A673 (cell line): ENCODE measurements at regions of chrX and their contacts with region 1.

Region 1: DNA sequence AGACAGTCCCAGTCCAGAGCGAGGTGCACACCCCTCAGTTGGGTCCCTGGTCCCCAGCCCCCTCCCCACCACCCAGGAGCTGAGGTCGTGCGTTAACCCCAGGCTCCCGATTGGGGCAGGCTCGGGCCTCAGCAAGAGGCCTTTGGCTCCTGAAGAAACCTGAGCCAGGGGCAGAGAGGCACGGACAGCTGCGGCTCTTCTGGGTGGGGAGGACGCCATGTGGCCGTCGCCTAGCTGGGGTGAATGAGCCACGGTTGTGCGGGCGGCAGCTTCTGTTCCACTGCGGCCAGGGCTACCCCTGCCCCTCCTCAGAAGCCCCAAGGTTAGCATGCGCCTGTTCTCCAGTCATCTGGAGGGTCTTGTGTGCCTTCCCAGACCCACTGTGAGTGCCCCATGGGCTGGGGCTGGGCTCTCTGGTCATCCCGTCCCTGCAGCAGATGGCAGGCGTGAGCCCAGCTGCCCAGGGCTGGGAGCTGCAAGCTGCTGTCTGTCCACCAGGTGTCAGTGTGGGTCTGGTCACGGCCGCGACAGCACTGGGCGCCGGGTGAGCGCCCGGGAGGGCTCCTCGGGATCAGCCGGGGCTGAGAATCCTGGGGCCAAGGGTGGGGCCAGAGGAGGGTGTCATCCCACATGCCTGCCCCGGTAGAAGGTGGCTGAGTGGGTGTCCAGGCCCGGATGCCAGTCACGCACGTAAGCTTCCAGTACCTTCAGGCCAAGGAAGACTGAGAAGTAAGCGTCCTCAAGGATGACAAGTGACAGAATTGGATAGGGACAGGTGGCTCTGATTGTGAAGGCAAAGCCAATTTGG is 21.9 kb downstream of the ATP2B3 start:
- DNase-seq: peak; percentile 58
- H3K4me3 ChIP-seq: no peak overlapping the region
- H3K27ac ChIP-seq: no peak overlapping the region
- H3K4me1 ChIP-seq: no peaks in the 10 kb centered on the region
- H3K27me3 ChIP-seq: no peaks in the 10 kb centered on the region
- CTCF ChIP-seq: peak; percentile 92

Region 2: DNA sequence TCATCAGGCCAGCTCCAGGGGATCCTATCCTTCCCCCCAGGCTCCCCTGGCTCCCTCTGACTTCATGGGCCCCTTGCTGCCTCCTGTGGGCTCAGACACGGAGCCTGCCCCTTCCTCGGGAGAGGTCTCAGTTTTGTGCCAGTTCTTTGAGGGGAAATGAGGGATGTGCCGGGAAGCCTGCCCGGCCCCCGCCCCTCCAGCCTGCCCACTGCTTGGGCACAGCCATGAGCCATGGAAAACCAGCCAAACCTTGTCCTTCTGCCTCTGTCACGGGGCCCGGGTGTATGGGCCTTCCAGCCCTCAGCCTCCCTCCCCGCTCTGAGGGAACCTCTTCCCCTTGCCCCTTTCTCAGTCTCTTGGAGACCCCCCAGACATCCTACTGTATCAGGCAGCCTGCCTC is 37.8 kb before region 1 on chrX:
- CTCF ChIA-PET with region 1: no interaction called
- POLR2A ChIA-PET with region 1: interaction called, 14 read pairs
- intact Hi-C with region 1: no loop called
- DNase-seq: no peak
- H3K4me3 ChIP-seq: no peak overlapping the region
- H3K27ac ChIP-seq: no peak overlapping the region
- H3K4me1 ChIP-seq: no peaks in the 10 kb centered on the region
- H3K27me3 ChIP-seq: no peaks in the 10 kb centered on the region
- CTCF ChIP-seq: no peak